Mammary epithelial cell (primary cell): ENCODE measurements at regions of chrX and their contacts with region 1.

Region 1: DNA sequence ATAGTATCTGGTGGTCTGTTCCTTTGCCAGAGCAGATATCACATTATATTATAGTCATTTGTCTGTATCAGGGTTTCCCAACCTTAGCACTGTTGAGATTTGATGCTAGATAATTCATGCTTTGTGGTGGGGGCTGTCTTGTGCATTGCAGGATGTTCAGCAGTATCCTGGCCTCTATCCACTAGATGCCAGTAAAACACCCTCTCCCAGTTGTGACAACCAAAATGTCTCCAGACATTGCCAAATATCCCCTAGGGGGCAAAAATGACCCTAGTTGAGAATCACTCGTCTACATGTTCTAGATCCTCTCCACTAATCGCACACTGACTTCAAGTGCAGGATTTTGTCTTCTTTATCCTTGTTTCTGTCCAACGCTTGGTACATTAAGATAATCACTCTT is 160.8 kb downstream of the FANCB start:
- DNase-seq: no peak
- H3K4me3 ChIP-seq: no peak overlapping the region
- H3K27ac ChIP-seq: no peak overlapping the region
- H3K4me1 ChIP-seq: no peaks in the 10 kb centered on the region
- H3K27me3 ChIP-seq: peaks cover 3% of the 10 kb centered on the region
- CTCF ChIP-seq: peak in 1 of 2 donors; percentile 15

Region 2: GRCh38 chrX:13761606-13762414 is 950.3 kb before region 1 on chrX:
- CTCF ChIA-PET with region 1: no interaction called
- dilution Hi-C with region 1: no loop called
- in situ Hi-C with region 1: no loop called
- intact Hi-C with region 1: no loop called
- DNase-seq: peak; percentile 17
- H3K4me3 ChIP-seq: no peak overlapping the region
- H3K27ac ChIP-seq: no peak overlapping the region
- H3K4me1 ChIP-seq: no peaks in the 10 kb centered on the region
- H3K27me3 ChIP-seq: no peaks in the 10 kb centered on the region
- CTCF ChIP-seq: no peak

Region 3: DNA sequence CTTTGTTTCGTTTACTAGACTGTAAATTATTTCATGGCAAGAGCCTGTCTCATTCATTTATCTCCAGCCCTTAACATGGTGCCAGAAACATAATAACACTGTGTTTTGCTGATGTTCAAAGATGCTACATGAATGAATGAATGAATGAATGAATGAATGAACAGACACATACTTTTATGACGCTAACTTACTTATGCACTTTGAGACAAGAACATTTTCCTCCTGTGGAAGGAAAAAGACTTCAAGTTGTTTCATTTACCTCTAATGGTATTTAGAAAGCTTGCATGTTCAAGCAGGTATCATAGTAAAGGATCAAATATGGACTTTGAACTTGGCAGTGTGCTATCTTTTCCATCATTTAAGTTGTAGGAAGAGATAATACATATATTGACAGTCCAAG is 51.1 kb before region 1 on chrX:
- CTCF ChIA-PET with region 1: no interaction called
- dilution Hi-C with region 1: no loop called
- in situ Hi-C with region 1: no loop called
- intact Hi-C with region 1: no loop called
- DNase-seq: no peak
- H3K4me3 ChIP-seq: no peak overlapping the region
- H3K27ac ChIP-seq: no peak overlapping the region
- H3K4me1 ChIP-seq: no peaks in the 10 kb centered on the region
- H3K27me3 ChIP-seq: peaks cover 7% of the 10 kb centered on the region
- CTCF ChIP-seq: no peak

Region 4: DNA sequence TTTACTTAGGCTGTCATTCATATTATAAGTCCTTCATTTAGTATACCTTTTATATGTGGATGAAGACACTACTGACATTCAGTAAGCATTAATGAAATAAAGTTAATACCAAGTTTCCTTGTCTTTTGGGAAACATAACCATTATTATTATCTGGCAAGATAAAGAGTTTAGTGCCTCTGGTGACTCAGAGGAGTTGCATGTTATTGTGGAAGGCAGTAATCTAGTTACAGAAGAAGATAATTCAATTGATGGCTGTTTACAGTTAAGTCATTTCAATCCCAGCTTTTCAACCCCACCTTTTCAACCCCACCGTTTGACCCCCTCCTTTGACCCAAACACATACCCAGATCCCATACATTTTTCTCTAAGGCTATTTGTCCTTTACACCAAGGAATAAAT is 17.0 kb after region 1 on chrX:
- CTCF ChIA-PET with region 1: no interaction called
- dilution Hi-C with region 1: no loop called
- in situ Hi-C with region 1: no loop called
- intact Hi-C with region 1: no loop called
- DNase-seq: no peak
- H3K4me3 ChIP-seq: no peak overlapping the region
- H3K27ac ChIP-seq: no peak overlapping the region
- H3K4me1 ChIP-seq: no peaks in the 10 kb centered on the region
- H3K27me3 ChIP-seq: no peaks in the 10 kb centered on the region
- CTCF ChIP-seq: no peak

Region 5: GRCh38 chrX:14963447-14964236 is 251.5 kb after region 1 on chrX:
- CTCF ChIA-PET with region 1: no interaction called
- dilution Hi-C with region 1: no loop called
- in situ Hi-C with region 1: no loop called
- intact Hi-C with region 1: loop called (anchors 2 kb)
- DNase-seq: peak; percentile 90
- H3K4me3 ChIP-seq: peak overlapping the region in 1 of 3 experiments; percentile 31
- H3K27ac ChIP-seq: peak overlapping the region; percentile 93
- H3K4me1 ChIP-seq: peaks cover 22% of the 10 kb centered on the region
- H3K27me3 ChIP-seq: no peaks in the 10 kb centered on the region
- CTCF ChIP-seq: no peak

Region 6: GRCh38 chrX:15438332-15438731 is 726.2 kb after region 1 on chrX:
- CTCF ChIA-PET with region 1: no interaction called
- dilution Hi-C with region 1: no loop called
- in situ Hi-C with region 1: no loop called
- intact Hi-C with region 1: no loop called
- DNase-seq: no peak
- H3K4me3 ChIP-seq: no peak overlapping the region
- H3K27ac ChIP-seq: no peak overlapping the region
- H3K4me1 ChIP-seq: no peaks in the 10 kb centered on the region
- H3K27me3 ChIP-seq: no peaks in the 10 kb centered on the region
- CTCF ChIP-seq: no peak